PC-9 (cell line): ENCODE measurements at regions of chr16 and their contacts with region 1.

Region 1: GRCh38 chr16:72989579-72990551 is 58.1 kb downstream of the ZFHX3 start:
- DNase-seq: peak; percentile 84 to 98
- H3K4me3 ChIP-seq: peak overlapping the region; percentile 46
- H3K27ac ChIP-seq: peak overlapping the region; percentile 99
- H3K4me1 ChIP-seq: peaks cover 78% of the 10 kb centered on the region
- H3K27me3 ChIP-seq: no peaks in the 10 kb centered on the region
- CTCF ChIP-seq: no peak

Region 2: GRCh38 chr16:72621651-72622050 is 368.2 kb before region 1 on chr16:
- CTCF ChIA-PET with region 1: no interaction called
- POLR2A ChIA-PET with region 1: no interaction called
- intact Hi-C with region 1: no loop called
- DNase-seq: no peak
- H3K4me3 ChIP-seq: no peak overlapping the region
- H3K27ac ChIP-seq: no peak overlapping the region
- H3K4me1 ChIP-seq: no peaks in the 10 kb centered on the region
- H3K27me3 ChIP-seq: no peaks in the 10 kb centered on the region
- CTCF ChIP-seq: no peak

Region 3: DNA sequence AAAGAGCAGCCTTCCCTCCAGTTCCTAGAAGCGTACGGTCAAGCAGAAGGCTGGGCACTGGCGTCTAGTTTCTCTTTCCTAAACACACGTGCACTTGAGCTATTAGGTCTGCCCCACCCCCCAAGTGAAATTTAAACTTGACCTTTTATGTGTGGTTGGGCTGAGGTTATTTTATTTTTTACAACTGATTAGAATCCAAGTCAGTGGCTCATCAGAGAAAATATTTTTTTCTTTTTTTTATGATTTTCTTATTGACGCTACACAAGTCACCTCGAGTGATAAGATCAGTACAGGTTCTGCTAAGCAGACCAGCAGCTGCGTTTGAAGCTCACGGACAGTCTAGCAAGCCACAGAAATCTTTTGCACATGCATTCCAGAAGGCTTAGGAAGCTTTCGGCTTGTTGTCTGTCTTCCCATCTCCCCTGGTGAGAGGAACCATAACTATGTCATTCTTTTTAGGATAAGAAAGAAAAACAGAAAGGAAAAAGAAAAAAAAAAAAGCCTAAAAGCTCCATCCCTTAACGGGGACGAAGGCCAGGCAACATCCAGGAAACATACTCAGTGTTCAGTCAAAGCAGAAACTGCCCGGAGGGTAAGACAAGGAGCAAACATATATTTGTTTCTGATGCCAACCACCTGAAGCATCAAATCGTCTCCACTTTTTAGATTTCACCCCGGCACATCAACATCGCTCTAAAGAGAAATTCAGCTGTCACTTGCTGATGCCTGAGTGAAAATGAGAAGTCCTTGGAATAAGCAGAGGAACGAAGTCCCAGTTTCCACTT is 36.9 kb before region 1 on chr16:
- CTCF ChIA-PET with region 1: no interaction called
- POLR2A ChIA-PET with region 1: no interaction called
- intact Hi-C with region 1: loop called (anchors 2 kb)
- DNase-seq: peak in 1 of 2 experiments; percentile 43
- H3K4me3 ChIP-seq: no peak overlapping the region
- H3K27ac ChIP-seq: no peak overlapping the region
- H3K4me1 ChIP-seq: no peaks in the 10 kb centered on the region
- H3K27me3 ChIP-seq: no peaks in the 10 kb centered on the region
- CTCF ChIP-seq: no peak

Region 4: DNA sequence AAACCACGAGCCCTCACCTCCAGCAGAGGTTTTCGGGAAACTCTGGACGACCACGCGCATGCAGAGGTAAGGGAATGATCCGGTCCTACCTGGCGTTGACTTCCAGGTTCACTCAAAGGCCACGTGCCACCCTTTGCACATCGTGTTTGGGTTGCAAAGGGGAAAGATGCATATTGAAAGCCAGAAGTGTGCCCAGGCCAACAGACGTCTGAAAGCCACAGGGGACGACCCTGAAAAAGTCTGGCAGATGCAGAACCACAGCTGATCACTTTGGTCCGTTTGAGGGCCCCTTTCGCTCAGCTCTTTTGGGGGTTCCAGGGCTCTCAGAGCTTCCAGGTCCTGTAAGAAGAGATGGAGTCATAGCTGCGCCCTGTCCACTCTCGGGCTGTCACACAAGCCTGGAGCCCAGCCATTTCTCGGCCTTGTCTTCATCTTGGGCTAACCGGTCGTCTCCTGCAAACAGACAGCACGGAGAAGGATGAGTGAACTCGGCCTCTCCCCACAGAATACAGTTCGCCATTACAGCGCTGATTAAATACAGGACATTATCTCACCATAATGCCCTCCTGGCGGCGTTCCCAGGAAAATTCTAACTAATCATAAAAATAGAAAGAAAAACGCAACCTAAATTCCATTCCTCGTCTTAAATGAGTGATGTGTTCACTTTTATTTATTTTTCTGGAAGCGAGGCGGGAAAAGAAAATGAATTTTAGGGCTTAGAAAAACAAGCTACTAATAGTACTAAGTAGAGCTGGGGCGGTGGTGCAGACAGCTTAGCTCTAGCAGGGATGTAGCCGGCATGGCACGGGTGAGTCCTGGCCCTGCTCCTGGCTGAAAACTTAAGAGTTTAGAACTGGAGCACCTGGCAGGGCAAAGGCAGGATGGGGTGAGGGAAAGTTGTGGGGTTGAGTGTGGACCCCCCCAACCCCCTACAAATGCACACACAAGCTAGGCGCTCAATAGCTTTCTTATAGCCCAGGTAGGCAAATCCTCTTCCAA is 103.6 kb after region 1 on chr16:
- CTCF ChIA-PET with region 1: no interaction called
- POLR2A ChIA-PET with region 1: no interaction called
- intact Hi-C with region 1: no loop called
- DNase-seq: no peak
- H3K4me3 ChIP-seq: no peak overlapping the region
- H3K27ac ChIP-seq: no peak overlapping the region
- H3K4me1 ChIP-seq: no peaks in the 10 kb centered on the region
- H3K27me3 ChIP-seq: no peaks in the 10 kb centered on the region
- CTCF ChIP-seq: no peak

Region 5: DNA sequence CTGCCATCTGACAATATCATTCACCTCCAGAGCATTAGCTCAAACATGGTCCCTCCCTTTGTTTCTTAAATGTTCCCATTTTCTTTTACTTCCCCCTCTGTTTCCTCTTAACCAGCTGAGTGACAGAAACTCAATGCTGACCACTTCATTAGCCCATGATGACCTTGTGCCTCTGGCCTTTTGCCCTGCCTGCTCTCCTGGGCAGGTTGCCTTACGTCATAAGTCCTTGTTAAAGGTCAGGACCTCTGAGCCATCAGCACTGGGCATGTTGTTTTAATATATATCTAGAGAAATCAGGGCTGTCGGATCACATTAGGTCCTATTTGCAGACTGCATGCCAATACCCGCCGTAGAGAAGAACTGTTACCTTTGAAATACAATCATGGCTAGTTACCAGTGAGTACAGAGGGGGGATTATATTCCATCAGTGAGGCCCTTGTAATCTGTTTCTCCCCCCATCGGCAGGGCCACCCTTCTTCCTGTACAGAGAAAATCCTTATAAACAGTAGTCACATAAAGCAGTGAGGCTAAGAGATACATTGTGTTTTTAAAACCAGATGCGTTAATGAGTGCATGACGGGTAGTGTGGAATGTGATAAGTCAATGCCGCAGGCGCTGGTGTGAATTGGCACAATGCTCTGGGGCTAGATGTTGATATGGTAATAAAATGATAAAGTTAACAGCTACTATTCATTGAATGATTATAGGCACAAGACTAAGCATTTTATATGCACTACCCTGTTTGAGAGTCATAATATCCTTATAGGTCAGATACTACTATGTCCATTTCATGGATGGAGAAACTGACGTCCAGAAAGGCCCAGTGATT is 152.4 kb after region 1 on chr16:
- CTCF ChIA-PET with region 1: no interaction called
- POLR2A ChIA-PET with region 1: no interaction called
- intact Hi-C with region 1: no loop called
- DNase-seq: no peak
- H3K4me3 ChIP-seq: no peak overlapping the region
- H3K27ac ChIP-seq: no peak overlapping the region
- H3K4me1 ChIP-seq: no peaks in the 10 kb centered on the region
- H3K27me3 ChIP-seq: peaks cover 15% of the 10 kb centered on the region; the same call in 1 of the 2 replicates
- CTCF ChIP-seq: no peak

Region 6: GRCh38 chr16:74833420-74833819 is 1843.6 kb after region 1 on chr16:
- CTCF ChIA-PET with region 1: interaction called, 11 read pairs
- POLR2A ChIA-PET with region 1: no interaction called
- intact Hi-C with region 1: no loop called
- DNase-seq: no peak
- H3K4me3 ChIP-seq: no peak overlapping the region
- H3K27ac ChIP-seq: no peak overlapping the region
- H3K4me1 ChIP-seq: no peaks in the 10 kb centered on the region
- H3K27me3 ChIP-seq: no peaks in the 10 kb centered on the region
- CTCF ChIP-seq: no peak